Tibial artery (tissue), 4 donors: ENCODE measurements at regions of chr1 and their contacts with region 1.

Region 1: GRCh38 chr1:165630629-165631341 is at the start of gene MGST3:
- DNase-seq: peak; percentile 94 to 97
- H3K4me3 ChIP-seq: peak within 1 kb of the TSS; percentile 67 to 90
- H3K27ac ChIP-seq: peak within 1 kb of the TSS; percentile 77 to 88
- H3K4me1 ChIP-seq: peaks cover 0 to 38% (median 32%) of the 10 kb centered on the region in 4 donors
- H3K27me3 ChIP-seq: no peaks in the 10 kb centered on the region
- CTCF ChIP-seq: no peak

Region 2: DNA sequence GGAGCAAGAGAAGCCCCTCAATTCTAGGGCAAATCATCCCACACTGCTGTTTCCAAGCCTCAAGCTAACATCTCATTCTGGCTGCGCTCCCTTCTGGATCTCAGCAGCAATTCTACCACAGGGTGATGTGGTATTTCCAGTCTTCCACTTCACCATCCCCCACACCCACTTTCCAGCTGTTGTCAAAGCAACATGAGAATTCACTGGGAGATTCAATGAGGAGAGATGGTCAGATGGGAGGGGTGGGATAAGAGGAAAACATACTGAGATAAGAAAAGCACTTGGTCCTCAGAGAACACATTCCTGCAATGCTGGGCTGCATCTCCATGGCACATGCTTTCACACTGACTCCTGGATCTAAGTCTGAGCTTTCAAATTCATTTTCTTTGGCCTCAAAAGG is 134.3 kb before region 1 on chr1:
- intact Hi-C with region 1: no loop called
- DNase-seq: no peak
- H3K4me3 ChIP-seq: no peak overlapping the region
- H3K27ac ChIP-seq: no peak overlapping the region
- H3K4me1 ChIP-seq: no peaks in the 10 kb centered on the region
- H3K27me3 ChIP-seq: no peaks in the 10 kb centered on the region
- CTCF ChIP-seq: no peak

Region 3: DNA sequence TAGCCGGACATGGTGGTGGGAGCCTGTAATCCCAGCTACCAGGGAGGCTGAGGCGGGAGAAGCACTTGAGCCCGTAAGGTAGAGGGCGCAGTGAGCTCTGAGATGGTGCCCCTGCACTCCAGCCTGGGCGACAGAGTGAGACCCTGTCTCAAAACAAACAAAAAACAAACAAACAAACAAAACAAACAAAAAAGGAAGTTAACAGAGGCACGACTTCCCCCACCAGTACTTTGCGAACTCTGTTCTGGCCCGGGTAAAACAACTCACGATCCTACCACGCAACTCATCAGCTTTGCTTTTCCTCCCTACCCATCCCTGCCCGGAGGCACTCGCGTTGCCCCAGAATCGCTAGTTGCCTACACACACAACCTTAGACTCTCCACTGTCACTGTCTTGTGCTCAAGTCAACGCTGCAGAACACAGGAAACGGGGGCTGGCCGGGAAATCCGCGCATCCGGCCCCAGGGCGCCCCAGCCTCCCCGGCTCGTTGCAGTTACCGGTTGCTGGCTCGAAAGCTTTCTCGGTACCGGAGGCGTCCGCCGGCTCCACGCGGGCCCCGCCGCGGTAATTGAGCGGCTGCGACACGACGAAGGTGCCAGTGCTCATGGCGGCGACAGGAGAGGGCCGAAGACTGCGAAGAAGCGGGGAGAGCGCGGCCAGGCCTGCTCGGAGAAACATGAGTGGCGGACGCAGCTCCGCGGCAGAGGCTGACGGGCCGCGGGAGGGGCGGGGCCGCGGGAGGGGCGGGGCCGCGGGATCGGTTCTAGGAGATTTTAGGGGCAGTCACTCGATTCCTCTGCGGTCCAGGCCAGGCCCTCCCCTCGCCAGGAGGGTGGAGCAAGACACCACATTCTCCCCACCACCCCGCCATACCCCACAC is 67.3 kb after region 1 on chr1 and contains the start of gene ALDH9A1:
- intact Hi-C with region 1: loop called (anchors 5 kb)
- DNase-seq: peak; percentile 83 to 95
- H3K4me3 ChIP-seq: peak within 1 kb of the TSS; percentile 85 to 89
- H3K27ac ChIP-seq: peak within 1 kb of the TSS; percentile 95 to 96
- H3K4me1 ChIP-seq: peaks cover 11 to 27% (median 20%) of the 10 kb centered on the region in 4 donors
- H3K27me3 ChIP-seq: no peaks in the 10 kb centered on the region
- CTCF ChIP-seq: peak in 1 of 2 experiments; percentile 33

Region 4: DNA sequence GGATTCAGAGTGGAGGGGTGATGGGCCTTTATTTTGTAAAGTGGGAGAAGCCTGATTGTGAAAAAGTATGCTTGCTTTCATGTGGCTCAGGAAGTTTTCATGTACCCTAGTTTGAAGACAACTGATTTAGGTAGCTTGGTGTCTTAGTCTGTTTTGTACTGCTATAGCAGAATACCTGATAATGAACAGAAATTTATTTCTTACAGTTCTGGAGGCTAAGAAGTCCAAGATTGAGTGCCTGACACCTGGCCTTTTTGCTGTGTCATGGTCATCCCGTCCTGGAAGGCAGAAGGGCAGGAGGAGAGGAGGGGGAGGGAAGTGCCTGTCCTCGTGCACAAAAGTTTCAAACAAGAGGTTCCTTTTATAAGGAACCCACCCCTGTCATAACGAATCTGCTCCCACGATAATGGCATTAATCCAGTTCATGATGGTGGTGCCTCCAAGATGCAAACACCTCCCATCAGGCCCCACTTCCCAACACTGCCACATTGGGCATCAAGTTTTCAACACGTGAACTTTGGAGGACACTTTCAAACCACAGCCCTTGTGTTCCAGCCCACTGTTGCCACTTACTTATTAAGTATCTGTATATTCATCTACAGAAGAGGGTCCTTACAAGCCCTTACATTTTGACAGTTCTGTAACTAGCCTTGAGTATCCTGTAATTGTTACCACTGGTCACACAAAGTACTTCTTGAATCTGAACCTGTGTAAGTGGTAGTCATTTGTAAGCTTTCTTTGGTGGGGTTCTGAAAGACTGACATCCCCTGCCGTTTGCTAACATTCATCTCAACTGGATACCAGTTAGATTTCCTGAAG is 206.1 kb after region 1 on chr1:
- intact Hi-C with region 1: loop called (anchors 10 kb)
- DNase-seq: no peak
- H3K4me3 ChIP-seq: no peak overlapping the region
- H3K27ac ChIP-seq: no peak overlapping the region
- H3K4me1 ChIP-seq: peaks cover 0 to 8% (median 2%) of the 10 kb centered on the region in 4 donors
- H3K27me3 ChIP-seq: no peaks in the 10 kb centered on the region
- CTCF ChIP-seq: no peak